ENCODE measurements at regions of chr5 and their contacts with region 1.

Region 1: GRCh38 chr5:76544268-76544926 is 78.8 kb downstream of the F2RL2 start:
- DNase-seq: peak; percentile 79
- ATAC-seq: peak; percentile 34
- H3K4me3 Mint-ChIP-seq: peak overlapping the region; percentile 73
- H3K27ac Mint-ChIP-seq: peak overlapping the region; percentile 100
- H3K4me1 Mint-ChIP-seq: peaks cover 90% of the 10 kb centered on the region
- H3K27me3 Mint-ChIP-seq: no peaks in the 10 kb centered on the region

Region 2: DNA sequence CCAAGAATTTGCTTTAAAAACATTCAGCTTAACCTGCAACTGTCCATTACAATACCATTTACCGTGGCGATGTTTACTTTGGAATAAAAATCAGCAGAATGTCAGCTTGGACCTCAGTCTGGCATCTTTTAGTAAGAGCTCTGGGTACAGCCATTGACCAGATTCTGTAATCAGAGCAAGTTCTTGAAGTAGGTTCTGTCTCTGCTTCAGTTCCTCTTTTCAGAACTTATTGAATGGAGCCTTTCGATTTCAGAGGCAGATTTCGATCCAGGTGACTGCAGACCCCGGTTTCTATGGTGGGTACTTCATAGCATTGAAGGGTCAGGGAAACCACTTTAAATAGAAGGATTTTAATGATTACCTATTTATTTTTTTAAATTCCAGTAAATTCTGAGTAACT is 514.7 kb before region 1 on chr5:
- CTCF ChIA-PET with region 1: no interaction called
- POLR2A ChIA-PET with region 1: no interaction called
- intact Hi-C with region 1: no loop called
- DNase-seq: no peak
- ATAC-seq: no peak
- H3K4me3 Mint-ChIP-seq: no peak overlapping the region
- H3K27ac Mint-ChIP-seq: no peak overlapping the region
- H3K4me1 Mint-ChIP-seq: no peaks in the 10 kb centered on the region
- H3K27me3 Mint-ChIP-seq: peaks cover 18% of the 10 kb centered on the region

Region 3: DNA sequence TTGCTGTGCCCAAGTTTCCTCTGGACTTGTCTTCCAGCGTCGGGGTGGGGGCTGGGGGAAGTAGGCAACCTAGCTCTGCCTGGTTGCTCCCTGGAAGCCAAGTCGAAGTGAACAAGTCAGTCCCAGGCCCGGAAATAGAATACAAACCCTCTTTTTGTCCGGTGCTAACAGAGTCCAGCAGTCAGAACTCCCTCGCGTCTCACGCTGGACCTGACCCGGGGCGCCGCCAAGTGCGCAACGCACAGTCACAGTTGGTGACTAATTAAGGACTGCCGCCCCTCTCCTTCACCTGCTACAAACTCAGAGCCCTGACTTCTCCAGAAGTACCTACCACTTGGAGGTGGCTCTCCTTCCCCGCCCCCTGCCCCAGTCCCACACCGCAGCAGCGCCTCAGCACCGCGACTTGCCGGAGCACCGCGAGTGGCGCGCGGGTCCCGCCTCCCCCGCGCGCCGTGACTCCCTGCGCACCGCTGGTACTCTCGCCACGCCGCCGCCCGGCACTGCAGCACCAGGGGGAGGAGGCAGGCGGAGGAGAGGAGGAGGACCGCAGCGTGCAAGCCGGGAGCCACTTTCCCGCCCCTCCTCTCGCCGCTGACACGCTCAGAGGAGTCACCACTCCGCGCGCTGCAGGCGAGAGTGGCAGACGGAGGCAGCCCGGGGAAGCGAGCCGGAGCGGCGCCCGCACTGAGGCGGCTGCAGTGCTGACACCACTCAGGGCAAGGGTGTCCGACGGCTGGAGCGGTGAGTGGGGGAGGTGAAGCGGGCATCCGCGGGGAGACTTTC is 461.4 kb before region 1 on chr5 and contains the start of gene SV2C:
- CTCF ChIA-PET with region 1: no interaction called
- POLR2A ChIA-PET with region 1: no interaction called
- intact Hi-C with region 1: loop called in 1 of 2 experiments (anchors 10 kb)
- DNase-seq: peak; percentile 74
- ATAC-seq: peak; percentile 86
- H3K4me3 Mint-ChIP-seq: peak within 1 kb of the TSS; percentile 65
- H3K27ac Mint-ChIP-seq: no peak within 1 kb of the TSS
- H3K4me1 Mint-ChIP-seq: peaks cover 31% of the 10 kb centered on the region
- H3K27me3 Mint-ChIP-seq: peaks cover 63% of the 10 kb centered on the region
- total RNA-seq, gene SV2C: 0.02 TPM in 1 of 2 experiments, not detected in the other

Region 4: DNA sequence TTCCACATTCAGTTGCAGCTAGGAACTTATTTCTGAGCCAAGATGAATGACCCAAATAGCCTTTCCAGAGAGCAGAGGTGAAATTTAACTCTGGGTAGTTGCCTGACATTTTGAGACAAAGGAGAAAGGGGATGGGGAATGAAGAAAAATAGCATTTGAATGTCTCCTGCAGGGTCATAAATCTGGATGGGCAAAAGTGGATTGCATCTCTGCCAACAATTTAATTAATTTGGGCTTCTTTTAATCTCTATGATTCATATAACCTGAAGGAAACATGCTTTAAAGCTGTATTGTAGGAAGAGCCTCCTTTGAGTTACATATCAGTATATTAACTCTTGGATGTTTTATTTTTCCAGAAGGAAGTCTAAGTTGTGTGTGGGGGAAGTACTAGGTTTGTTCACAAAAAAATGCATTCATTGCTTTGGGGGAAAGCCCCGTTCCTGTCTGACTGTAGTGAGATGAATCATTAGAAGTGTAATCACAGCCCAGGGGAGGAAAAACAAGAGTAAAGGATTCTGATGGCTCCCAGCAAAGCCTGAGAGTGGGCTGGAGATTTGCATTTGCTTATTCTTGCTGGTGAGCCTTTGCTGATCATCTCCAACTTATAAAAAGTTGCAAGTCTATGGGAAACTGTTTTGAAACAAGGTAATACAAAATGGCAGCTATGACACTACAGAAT is 274.3 kb before region 1 on chr5:
- CTCF ChIA-PET with region 1: interaction called, 6 read pairs
- POLR2A ChIA-PET with region 1: interaction called, 3 read pairs
- intact Hi-C with region 1: loop called (anchors 1 kb)
- DNase-seq: peak; percentile 67
- ATAC-seq: peak; percentile 78
- H3K4me3 Mint-ChIP-seq: peak overlapping the region; percentile 52
- H3K27ac Mint-ChIP-seq: peak overlapping the region; percentile 96
- H3K4me1 Mint-ChIP-seq: peaks cover 40% of the 10 kb centered on the region
- H3K27me3 Mint-ChIP-seq: peaks cover 7% of the 10 kb centered on the region

Region 5: DNA sequence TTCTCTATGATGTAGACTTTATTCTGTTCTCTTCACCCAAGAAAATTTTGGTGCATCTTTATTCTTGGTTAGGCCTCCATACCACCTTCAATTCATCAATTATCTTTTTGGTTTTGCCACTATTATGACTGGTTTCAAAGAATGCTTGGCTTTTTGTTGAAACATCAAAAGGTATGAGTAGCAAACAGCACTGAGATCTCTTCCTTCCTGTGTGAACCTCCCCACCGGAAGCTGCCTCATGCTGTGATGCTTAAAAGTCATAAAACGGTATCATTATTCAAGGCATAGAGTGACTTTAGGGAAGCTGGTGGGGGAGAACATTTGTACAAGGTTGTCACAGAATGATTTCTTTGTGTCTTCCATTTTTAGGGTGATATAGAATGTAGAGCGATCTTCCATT is 70.7 kb before region 1 on chr5:
- CTCF ChIA-PET with region 1: interaction called, 14 read pairs
- POLR2A ChIA-PET with region 1: interaction called, 5 read pairs
- intact Hi-C with region 1: loop called (anchors 1 kb)
- DNase-seq: peak; percentile 82
- ATAC-seq: peak; percentile 87
- H3K4me3 Mint-ChIP-seq: peak overlapping the region; percentile 16
- H3K27ac Mint-ChIP-seq: peak overlapping the region; percentile 92
- H3K4me1 Mint-ChIP-seq: peaks cover 75% of the 10 kb centered on the region
- H3K27me3 Mint-ChIP-seq: no peaks in the 10 kb centered on the region

Region 6: GRCh38 chr5:76582230-76583162 is 38.1 kb after region 1 on chr5:
- CTCF ChIA-PET with region 1: interaction called, 26 read pairs
- POLR2A ChIA-PET with region 1: interaction called, 12 read pairs
- intact Hi-C with region 1: loop called (anchors 1 kb)
- DNase-seq: peak; percentile 52
- ATAC-seq: peak; percentile 93
- H3K4me3 Mint-ChIP-seq: no peak overlapping the region
- H3K27ac Mint-ChIP-seq: peak overlapping the region; percentile 60
- H3K4me1 Mint-ChIP-seq: peaks cover 20% of the 10 kb centered on the region
- H3K27me3 Mint-ChIP-seq: no peaks in the 10 kb centered on the region